MCF 10A (cell line): ENCODE measurements at regions of chr2 and their contacts with region 1.

Region 1: GRCh38 chr2:75466708-75467311 is 93.9 kb downstream of the EVA1A start:
- DNase-seq: peak; percentile 57
- H3K4me3 Mint-ChIP-seq: no peak overlapping the region
- H3K27ac Mint-ChIP-seq: no peak overlapping the region
- H3K4me1 Mint-ChIP-seq: peaks cover 5% of the 10 kb centered on the region
- H3K27me3 Mint-ChIP-seq: peaks cover 20% of the 10 kb centered on the region
- CTCF ChIP-seq: peak; percentile 47

Region 2: GRCh38 chr2:74876081-74876886 is 590.5 kb before region 1 on chr2:
- CTCF ChIA-PET with region 1: no interaction called
- POLR2A ChIA-PET with region 1: no interaction called
- intact Hi-C with region 1: no loop called
- DNase-seq: peak; percentile 70
- H3K4me3 Mint-ChIP-seq: no peak overlapping the region
- H3K27ac Mint-ChIP-seq: peak overlapping the region; percentile 61
- H3K4me1 Mint-ChIP-seq: peaks cover 20% of the 10 kb centered on the region
- H3K27me3 Mint-ChIP-seq: no peaks in the 10 kb centered on the region
- CTCF ChIP-seq: peak; percentile 62

Region 3: GRCh38 chr2:75454241-75454620 is 12.6 kb before region 1 on chr2:
- CTCF ChIA-PET with region 1: interaction called, 17 read pairs
- POLR2A ChIA-PET with region 1: no interaction called
- intact Hi-C with region 1: no loop called
- DNase-seq: no peak
- H3K4me3 Mint-ChIP-seq: no peak overlapping the region
- H3K27ac Mint-ChIP-seq: no peak overlapping the region
- H3K4me1 Mint-ChIP-seq: no peaks in the 10 kb centered on the region
- H3K27me3 Mint-ChIP-seq: peaks cover 2% of the 10 kb centered on the region
- CTCF ChIP-seq: no peak

Region 4: GRCh38 chr2:75527676-75528598 is 61.1 kb after region 1 on chr2:
- CTCF ChIA-PET with region 1: interaction called, 12 read pairs
- POLR2A ChIA-PET with region 1: interaction called, 3 read pairs
- intact Hi-C with region 1: no loop called
- DNase-seq: peak; percentile 66
- H3K4me3 Mint-ChIP-seq: no peak overlapping the region
- H3K27ac Mint-ChIP-seq: peak overlapping the region; percentile 76
- H3K4me1 Mint-ChIP-seq: peaks cover 33% of the 10 kb centered on the region
- H3K27me3 Mint-ChIP-seq: no peaks in the 10 kb centered on the region
- CTCF ChIP-seq: no peak

Region 5: GRCh38 chr2:75560768-75561565 is 94.2 kb after region 1 on chr2 and contains the start of gene EVA1A:
- CTCF ChIA-PET with region 1: interaction called, 50 read pairs
- POLR2A ChIA-PET with region 1: interaction called, 4 read pairs
- intact Hi-C with region 1: loop called (anchors 2 kb)
- DNase-seq: peak; percentile 58
- H3K4me3 Mint-ChIP-seq: peak within 1 kb of the TSS; percentile 92
- H3K27ac Mint-ChIP-seq: peak within 1 kb of the TSS; percentile 46
- H3K4me1 Mint-ChIP-seq: peaks cover 28% of the 10 kb centered on the region
- H3K27me3 Mint-ChIP-seq: no peaks in the 10 kb centered on the region
- CTCF ChIP-seq: no peak
- total RNA-seq, gene EVA1A: 7.6 and 14.4 TPM in 2 replicates

Region 6: GRCh38 chr2:75619956-75620740 is 153.3 kb after region 1 on chr2:
- CTCF ChIA-PET with region 1: interaction called, 108 read pairs
- POLR2A ChIA-PET with region 1: interaction called, 4 read pairs
- intact Hi-C with region 1: no loop called
- DNase-seq: peak; percentile 40
- H3K4me3 Mint-ChIP-seq: no peak overlapping the region
- H3K27ac Mint-ChIP-seq: peak overlapping the region; percentile 57
- H3K4me1 Mint-ChIP-seq: peaks cover 18% of the 10 kb centered on the region
- H3K27me3 Mint-ChIP-seq: no peaks in the 10 kb centered on the region
- CTCF ChIP-seq: no peak

Region 7: DNA sequence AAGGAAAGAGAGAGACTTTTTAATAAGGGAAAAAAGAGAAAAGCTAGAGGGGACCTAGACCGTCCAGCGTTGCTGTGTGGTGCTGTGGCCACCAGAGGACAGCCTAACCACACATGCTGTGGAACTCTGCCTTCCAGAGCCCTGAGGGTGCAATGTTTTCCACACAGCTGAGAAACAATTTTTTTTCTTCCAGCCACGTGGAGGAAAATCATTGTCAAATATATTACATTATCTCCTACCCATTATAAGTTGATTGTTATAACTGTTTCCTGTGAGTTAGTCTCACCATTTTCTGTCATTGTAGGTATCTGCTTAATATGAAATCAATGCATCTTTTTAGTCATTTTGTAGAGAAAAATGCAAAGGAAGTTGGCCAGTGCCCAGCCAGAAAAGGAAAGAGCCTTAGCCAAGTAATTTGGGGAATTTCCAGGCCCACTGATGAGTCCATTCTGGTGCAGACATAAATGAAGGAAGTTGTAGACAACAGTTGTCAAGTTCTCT is 173.9 kb after region 1 on chr2:
- CTCF ChIA-PET with region 1: interaction called, 97 read pairs
- POLR2A ChIA-PET with region 1: no interaction called
- intact Hi-C with region 1: no loop called
- DNase-seq: peak; percentile 77
- H3K4me3 Mint-ChIP-seq: no peak overlapping the region
- H3K27ac Mint-ChIP-seq: no peak overlapping the region
- H3K4me1 Mint-ChIP-seq: peaks cover 16% of the 10 kb centered on the region
- H3K27me3 Mint-ChIP-seq: peaks cover 29% of the 10 kb centered on the region
- CTCF ChIP-seq: peak; percentile 97